Activated T-helper 2 cell treated with anti-CD3 and anti-CD28 coated beads, Interferon-gamma antibody, Interleukin-2, Interleukin-4, amounts not matched to agents 10 μg/mL and 5 μg/mL and 100 μg/mL, durations not matched to agents 14 hours and 24 hours and 36 hours (primary cell): ENCODE measurements at regions of chr4 and their contacts with region 1.

Region 1: DNA sequence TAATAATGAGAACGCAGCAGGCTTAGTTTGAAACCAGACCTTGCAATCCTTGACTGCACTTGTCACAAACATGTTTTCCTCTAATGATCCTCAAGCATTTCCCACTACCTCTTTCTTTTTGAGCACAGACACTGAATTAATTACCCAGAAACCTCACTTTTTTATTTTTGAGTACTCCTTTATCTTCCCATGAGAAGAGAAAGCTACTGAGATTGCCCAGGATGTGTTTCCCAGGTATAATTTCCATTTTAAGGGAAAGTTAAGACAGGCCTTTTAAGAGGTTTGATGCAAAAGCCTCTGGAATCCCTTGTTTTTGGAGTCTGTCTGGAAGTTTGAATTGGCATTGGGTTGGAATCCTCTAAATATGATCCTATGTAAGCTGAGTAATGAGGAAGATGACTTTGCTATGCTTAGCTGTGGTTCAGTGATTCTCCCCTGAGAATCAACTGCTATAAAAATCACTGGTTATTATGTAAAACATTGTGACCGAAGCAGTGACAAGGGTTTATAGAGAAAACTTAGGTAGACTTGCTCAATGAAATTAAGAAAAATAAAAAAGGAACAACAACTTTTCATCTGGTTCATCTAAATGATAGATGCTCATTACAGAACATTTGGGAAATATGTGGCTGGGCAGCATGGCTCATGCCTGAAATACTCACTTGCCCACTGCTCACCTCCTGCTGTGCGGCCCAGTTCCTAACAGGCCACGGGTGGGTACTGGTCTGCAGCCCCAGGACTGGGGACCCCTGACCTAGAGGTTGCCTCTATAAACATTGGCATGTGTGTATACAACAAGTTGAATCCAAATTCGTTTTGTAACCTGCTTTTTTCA is 10.8 kb upstream of the RHOH start:
- DNase-seq: no peak
- H3K4me3 Mint-ChIP-seq: no peak overlapping the region
- H3K27ac Mint-ChIP-seq: no peak overlapping the region
- H3K4me1 Mint-ChIP-seq: peaks cover 58% of the 10 kb centered on the region
- H3K27me3 Mint-ChIP-seq: no peaks in the 10 kb centered on the region

Region 2: GRCh38 chr4:40121515-40121914 is 64.5 kb before region 1 on chr4:
- intact Hi-C with region 1: loop called (anchors 2 kb)
- DNase-seq: no peak
- H3K4me3 Mint-ChIP-seq: no peak overlapping the region
- H3K27ac Mint-ChIP-seq: peak overlapping the region; percentile 42
- H3K4me1 Mint-ChIP-seq: peaks cover 38% of the 10 kb centered on the region
- H3K27me3 Mint-ChIP-seq: no peaks in the 10 kb centered on the region

Region 3: GRCh38 chr4:40205259-40206198 is 19.5 kb after region 1 on chr4:
- intact Hi-C with region 1: loop called (anchors 1 kb)
- DNase-seq: peak; percentile 47
- H3K4me3 Mint-ChIP-seq: peak overlapping the region; percentile 90
- H3K27ac Mint-ChIP-seq: peak overlapping the region; percentile 94
- H3K4me1 Mint-ChIP-seq: peaks cover 72% of the 10 kb centered on the region
- H3K27me3 Mint-ChIP-seq: no peaks in the 10 kb centered on the region

Region 4: DNA sequence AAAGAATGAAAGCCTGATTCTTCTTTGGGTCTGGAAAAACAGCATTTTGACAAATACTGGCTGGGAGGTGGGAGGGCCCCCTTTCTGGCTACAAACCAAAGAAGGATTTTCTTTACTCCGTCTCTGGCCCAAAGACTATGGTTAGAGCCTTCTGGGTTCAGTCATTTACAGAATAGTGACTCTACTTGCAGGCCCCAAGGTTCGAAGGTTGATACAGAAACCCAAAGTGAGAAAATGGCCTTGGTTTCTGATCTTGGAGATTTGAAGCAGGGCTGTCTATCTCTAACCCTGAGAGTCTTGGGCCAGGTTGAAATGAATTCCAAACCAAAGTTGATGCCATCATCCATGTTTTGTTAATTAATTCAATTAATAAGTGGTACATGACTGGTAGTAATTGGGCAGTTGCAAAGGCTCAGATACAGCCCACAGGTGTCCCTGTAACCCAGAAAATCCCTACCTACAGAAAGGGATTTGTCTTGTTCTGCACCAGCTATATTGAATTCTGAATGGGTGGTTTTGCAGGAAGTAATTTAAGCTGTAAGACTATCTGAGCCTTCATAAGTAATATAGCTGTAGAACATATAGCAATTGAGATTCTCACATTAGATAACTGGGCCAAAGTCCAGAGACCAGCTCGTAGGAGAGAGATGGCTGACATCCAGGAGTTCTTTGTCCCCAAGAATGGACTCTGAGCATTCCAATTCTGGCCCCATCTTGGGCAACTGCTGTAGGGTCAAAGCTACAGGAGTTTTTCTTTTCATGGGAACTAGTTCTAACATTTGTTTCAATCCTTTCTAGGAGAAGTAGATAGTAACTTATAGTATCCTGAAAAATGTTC is 183.6 kb after region 1 on chr4:
- intact Hi-C with region 1: no loop called
- DNase-seq: no peak
- H3K4me3 Mint-ChIP-seq: no peak overlapping the region
- H3K27ac Mint-ChIP-seq: no peak overlapping the region
- H3K4me1 Mint-ChIP-seq: peaks cover 4% of the 10 kb centered on the region
- H3K27me3 Mint-ChIP-seq: peaks cover 6% of the 10 kb centered on the region